PC-9 (cell line): ENCODE measurements at regions of chr12 and their contacts with region 1.

Region 1: DNA sequence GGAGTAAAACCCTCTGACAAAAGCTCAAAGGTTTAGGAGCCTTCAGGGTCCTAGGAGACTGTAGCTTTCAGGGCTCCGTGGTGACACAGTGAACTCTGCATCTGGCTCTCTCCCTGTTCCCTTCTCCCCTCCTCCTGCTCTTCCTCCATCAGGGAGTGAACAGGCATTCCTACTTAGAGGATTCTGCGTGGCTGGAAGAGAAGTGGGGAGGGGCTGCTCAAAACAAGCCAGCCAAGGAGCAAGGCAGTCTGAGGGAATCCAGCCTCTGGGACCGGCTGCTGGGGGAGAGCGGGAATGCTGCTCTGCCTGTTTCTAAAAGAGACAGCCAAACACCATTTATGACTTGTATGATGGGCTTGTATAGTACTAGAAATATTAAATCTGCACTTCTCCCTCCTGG is 49.5 kb downstream of the RBMS2 start:
- DNase-seq: no peak
- H3K4me3 ChIP-seq: no peak overlapping the region
- H3K27ac ChIP-seq: no peak overlapping the region
- H3K4me1 ChIP-seq: peaks cover 29% of the 10 kb centered on the region
- H3K27me3 ChIP-seq: no peaks in the 10 kb centered on the region
- CTCF ChIP-seq: no peak

Region 2: GRCh38 chr12:56202366-56202765 is 368.8 kb before region 1 on chr12:
- CTCF ChIA-PET with region 1: no interaction called
- POLR2A ChIA-PET with region 1: no interaction called
- intact Hi-C with region 1: no loop called
- DNase-seq: no peak
- H3K4me3 ChIP-seq: no peak overlapping the region
- H3K27ac ChIP-seq: no peak overlapping the region
- H3K4me1 ChIP-seq: no peaks in the 10 kb centered on the region
- H3K27me3 ChIP-seq: no peaks in the 10 kb centered on the region
- CTCF ChIP-seq: no peak

Region 3: DNA sequence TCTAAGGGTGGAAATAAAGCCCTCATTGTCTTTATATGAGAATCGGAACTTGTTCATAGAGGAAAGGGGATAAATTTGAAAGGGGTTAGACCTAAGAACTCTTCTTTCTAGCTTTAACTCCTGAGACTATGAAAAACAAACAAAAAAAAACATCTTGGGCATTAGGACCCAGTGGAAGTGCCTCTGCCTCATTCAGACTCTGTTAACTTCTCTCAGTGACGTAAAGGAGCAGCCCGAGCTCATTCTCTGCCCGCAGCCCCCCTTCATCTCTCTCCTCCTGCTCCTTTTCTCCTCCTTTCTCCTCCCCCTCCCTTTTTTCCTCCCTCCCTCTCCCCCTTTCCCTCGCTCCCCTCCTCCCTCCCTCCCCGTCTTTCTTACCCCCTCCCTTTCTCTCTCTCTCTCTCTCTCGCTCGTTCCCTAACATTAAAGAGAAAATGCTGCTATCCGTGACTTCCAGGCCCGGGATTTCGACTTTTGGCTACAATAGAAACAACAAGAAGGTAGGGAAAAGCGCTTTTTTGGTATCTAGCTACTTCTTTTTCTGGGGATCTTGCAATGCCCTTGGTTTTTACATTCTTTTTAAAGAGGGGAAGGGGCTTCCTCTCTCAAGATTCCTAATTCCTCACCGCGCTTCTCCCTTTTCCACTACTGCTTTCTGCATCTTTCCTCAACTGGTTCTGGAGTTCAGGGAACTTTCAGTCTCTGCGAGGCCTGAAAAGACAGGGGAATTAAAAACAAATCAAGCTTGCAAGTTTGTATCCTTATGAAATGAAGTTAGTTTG is 49.3 kb before region 1 on chr12 and contains the start of gene RBMS2:
- CTCF ChIA-PET with region 1: interaction called, 16 read pairs
- POLR2A ChIA-PET with region 1: no interaction called
- intact Hi-C with region 1: no loop called
- DNase-seq: peak; percentile 76 to 82
- H3K4me3 ChIP-seq: peak within 1 kb of the TSS; percentile 80
- H3K27ac ChIP-seq: peak within 1 kb of the TSS; percentile 95
- H3K4me1 ChIP-seq: peaks cover 76% of the 10 kb centered on the region
- H3K27me3 ChIP-seq: no peaks in the 10 kb centered on the region
- CTCF ChIP-seq: no peak
- total RNA-seq, gene RBMS2: 44.7 and 81.8 TPM in 2 replicates

Region 4: DNA sequence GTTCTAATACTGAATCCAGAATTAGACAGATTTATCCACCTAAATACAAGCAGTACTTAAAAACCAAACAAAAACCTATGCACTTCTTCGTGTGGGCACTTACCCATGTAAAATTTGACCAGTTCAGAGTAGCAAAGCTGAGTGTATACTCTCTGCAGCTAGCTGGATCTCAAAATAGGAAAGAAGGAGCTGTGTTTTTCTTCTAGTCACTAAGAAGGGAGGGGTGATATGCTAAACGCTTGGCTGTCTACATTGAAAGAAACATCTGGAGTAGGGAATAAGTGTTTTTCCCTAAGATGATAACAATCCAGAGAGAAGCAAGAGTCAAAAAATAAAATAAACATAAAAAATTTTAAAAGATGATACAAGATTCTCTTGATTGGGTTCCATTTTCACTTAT is 29.5 kb before region 1 on chr12:
- CTCF ChIA-PET with region 1: interaction called, 12 read pairs
- POLR2A ChIA-PET with region 1: no interaction called
- intact Hi-C with region 1: no loop called
- DNase-seq: no peak
- H3K4me3 ChIP-seq: no peak overlapping the region
- H3K27ac ChIP-seq: no peak overlapping the region
- H3K4me1 ChIP-seq: peaks cover 11% of the 10 kb centered on the region
- H3K27me3 ChIP-seq: no peaks in the 10 kb centered on the region
- CTCF ChIP-seq: no peak